IMR-90 (cell line): ENCODE measurements at regions of chr3 and their contacts with region 1.

Region 1: DNA sequence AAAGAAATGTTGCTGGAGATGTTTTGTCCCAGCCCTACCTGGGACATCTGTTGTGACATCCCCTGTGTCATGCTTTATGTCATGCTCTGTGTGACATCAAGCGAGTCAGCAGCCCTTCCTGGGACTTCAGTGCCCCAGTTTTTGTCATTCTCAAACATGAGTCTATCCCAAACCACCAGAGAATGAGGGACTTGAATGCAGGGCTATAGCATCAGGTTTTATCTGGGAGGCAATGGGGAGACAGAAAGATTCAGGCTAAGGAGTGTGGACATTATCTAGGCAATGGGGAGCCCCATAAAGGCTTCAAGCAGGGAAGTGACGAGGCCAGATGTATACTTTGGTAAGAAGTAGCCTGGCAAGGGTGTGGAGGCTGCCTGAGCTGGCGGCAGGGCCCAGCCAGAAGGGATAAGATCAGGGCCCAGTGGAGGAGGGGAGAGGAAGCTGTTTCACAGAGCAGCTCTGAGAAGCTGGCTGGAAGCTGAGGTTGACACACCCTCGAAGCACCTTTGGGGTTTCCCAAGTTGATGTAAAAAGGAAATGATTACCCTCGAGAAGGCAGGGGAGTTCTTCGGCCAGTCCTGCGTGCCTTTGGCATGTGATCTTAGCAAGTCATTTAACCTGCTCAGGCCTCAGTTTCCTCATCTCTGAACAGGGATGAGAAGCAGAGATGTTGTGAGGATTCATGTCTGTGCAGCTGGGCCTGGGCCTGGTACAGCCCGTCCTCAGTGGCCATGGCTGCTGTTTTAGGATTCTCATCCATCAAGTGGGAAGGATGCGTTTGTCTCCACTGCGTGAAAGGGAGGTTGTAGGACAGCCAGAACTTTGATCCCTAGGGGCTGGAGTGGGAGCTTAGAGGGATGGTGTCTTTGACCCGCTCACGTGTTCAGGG is 34.3 kb downstream of the IRAK2 start:
- DNase-seq: peak; percentile 88
- ATAC-seq: peak; percentile 53; the same call in 1 of the 2 replicates
- H3K4me3 ChIP-seq: no peak overlapping the region
- H3K27ac ChIP-seq: peak overlapping the region; percentile 19
- H3K4me1 ChIP-seq: peaks cover 29% of the 10 kb centered on the region
- H3K27me3 ChIP-seq: no peaks in the 10 kb centered on the region
- CTCF ChIP-seq: no peak
- POLR2A ChIP-seq: no peak
- RAD21 ChIP-seq: no peak

Region 2: GRCh38 chr3:10004960-10005564 is 193.9 kb before region 1 on chr3:
- CTCF ChIA-PET with region 1: no interaction called
- POLR2A ChIA-PET with region 1: no interaction called
- dilution Hi-C with region 1: no loop called
- in situ Hi-C with region 1: no loop called
- intact Hi-C with region 1: no loop called
- DNase-seq: no peak
- ATAC-seq: no peak
- H3K4me3 ChIP-seq: no peak overlapping the region
- H3K27ac ChIP-seq: no peak overlapping the region
- H3K4me1 ChIP-seq: peaks cover 6% of the 10 kb centered on the region
- H3K27me3 ChIP-seq: no peaks in the 10 kb centered on the region
- CTCF ChIP-seq: no peak
- POLR2A ChIP-seq: no peak
- RAD21 ChIP-seq: no peak

Region 3: GRCh38 chr3:10142707-10143566 is 56.1 kb before region 1 on chr3:
- CTCF ChIA-PET with region 1: no interaction called
- POLR2A ChIA-PET with region 1: no interaction called
- dilution Hi-C with region 1: no loop called
- in situ Hi-C with region 1: no loop called
- intact Hi-C with region 1: no loop called
- DNase-seq: no peak
- ATAC-seq: no peak
- H3K4me3 ChIP-seq: peak overlapping the region; percentile 71
- H3K27ac ChIP-seq: no peak overlapping the region
- H3K4me1 ChIP-seq: peaks cover 7% of the 10 kb centered on the region
- H3K27me3 ChIP-seq: no peaks in the 10 kb centered on the region
- CTCF ChIP-seq: no peak
- POLR2A ChIP-seq: no peak
- RAD21 ChIP-seq: no peak

Region 4: DNA sequence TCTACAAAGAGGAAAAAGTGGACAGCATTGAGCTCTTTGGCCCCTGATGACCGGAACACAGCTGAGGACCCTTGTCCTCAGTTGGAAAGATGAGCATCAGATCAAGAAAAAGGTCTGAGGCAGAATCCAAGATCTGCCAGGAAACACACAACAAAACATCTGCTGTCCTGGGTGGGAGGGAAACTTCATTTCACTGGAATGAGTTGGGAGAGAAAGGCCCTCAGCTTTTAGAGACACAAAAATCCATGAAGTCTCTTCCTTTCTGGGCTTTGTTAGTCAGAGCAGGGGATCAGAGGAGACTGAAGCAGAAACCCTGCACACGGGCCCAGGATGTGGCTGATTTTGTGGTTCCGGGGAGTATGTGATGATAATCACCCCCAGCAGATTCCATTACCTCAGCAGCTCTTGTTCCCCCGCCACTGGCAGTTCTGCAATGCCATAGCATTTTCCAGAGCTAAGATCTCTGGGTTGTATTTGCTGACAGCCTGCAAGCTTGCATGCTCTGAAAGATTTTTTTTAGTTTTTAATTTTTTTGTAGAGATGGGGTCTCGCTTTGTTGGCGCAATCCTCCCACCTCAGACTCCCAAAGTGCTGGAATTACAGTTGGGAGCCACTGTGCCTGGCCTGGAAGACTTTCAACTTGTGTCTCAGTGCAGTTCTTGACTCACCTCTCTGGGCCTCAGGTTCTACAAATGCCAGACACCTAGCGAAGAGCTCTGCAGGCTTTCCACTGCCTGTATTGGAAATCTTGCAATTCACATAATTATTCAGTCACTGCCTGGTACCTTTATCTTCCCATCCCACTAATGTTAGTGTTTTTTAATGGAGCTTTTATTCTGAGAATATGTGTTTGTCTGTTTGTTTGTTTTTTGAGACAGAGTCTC is 43.4 kb after region 1 on chr3:
- CTCF ChIA-PET with region 1: no interaction called
- POLR2A ChIA-PET with region 1: no interaction called
- dilution Hi-C with region 1: no loop called
- in situ Hi-C with region 1: no loop called
- intact Hi-C with region 1: no loop called
- DNase-seq: peak; percentile 54
- ATAC-seq: no peak; the same call in 1 of the 2 replicates
- H3K4me3 ChIP-seq: no peak overlapping the region
- H3K27ac ChIP-seq: no peak overlapping the region
- H3K4me1 ChIP-seq: no peaks in the 10 kb centered on the region; the same call in 1 of the 2 replicates
- H3K27me3 ChIP-seq: no peaks in the 10 kb centered on the region
- CTCF ChIP-seq: no peak
- POLR2A ChIP-seq: no peak
- RAD21 ChIP-seq: no peak

Region 5: DNA sequence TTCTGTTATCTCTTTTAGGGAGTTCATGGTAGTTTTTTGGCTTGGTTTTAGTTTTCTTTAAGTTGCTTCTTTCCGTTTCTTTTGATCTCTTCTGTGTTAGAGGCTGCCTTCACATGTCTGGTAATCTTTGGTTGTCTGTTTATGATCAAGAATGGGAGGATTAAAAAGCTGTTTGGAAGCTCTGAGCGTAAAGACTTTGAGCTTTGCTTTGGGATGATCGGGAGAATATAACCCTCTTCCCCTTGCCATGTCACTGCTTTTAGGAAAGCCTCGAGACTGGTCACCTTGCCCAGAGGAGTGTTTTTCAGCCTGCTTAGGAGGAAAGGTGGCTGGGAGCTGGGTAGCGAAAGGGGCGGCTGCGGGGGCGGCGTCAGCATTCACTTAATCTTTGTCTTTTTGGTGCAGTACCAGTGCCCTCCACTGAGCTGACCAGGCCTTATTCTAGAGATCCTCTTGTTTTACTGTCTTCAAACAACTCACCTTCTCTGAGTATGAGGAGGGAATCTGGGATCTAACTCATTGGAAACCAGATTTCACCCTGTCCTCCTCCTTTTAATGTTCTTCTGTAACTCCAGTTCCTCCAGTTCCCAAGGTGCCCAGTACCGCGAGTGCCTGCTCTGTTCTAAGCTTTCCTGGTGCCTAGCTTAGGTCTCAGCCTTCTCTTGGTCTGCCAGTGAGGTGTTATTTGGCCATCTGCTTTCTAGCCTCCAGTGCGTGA is 64.8 kb after region 1 on chr3:
- CTCF ChIA-PET with region 1: no interaction called
- POLR2A ChIA-PET with region 1: interaction called, 12 read pairs
- dilution Hi-C with region 1: no loop called
- in situ Hi-C with region 1: no loop called
- intact Hi-C with region 1: no loop called
- DNase-seq: peak; percentile 42
- ATAC-seq: peak; percentile 91
- H3K4me3 ChIP-seq: no peak overlapping the region
- H3K27ac ChIP-seq: no peak overlapping the region
- H3K4me1 ChIP-seq: peaks cover 5% of the 10 kb centered on the region; the same call in 1 of the 2 replicates
- H3K27me3 ChIP-seq: no peaks in the 10 kb centered on the region
- CTCF ChIP-seq: peak; percentile 39
- POLR2A ChIP-seq: no peak
- RAD21 ChIP-seq: peak; percentile 22; the same call in 1 of the 2 replicates